ENCODE measurements at regions of chr6 and their contacts with region 1.

Region 1: GRCh38 chr6:116405138-116405537 is 34.4 kb downstream of the DSE start:
- DNase-seq: peak; percentile 71
- ATAC-seq: peak; percentile 53
- H3K4me3 ChIP-seq: peak overlapping the region in 3 of 5 experiments; percentile 14 to 42 (median 18)
- H3K4me3 Mint-ChIP-seq: peak overlapping the region; percentile 61
- H3K27ac ChIP-seq: peak overlapping the region; percentile 70 to 84
- H3K27ac Mint-ChIP-seq: peak overlapping the region; percentile 96
- H3K4me1 ChIP-seq: peaks cover 58 to 60% of the 10 kb centered on the region in 2 donors
- H3K4me1 Mint-ChIP-seq: peaks cover 53% of the 10 kb centered on the region
- H3K27me3 ChIP-seq: no peaks in the 10 kb centered on the region
- H3K27me3 Mint-ChIP-seq: no peaks in the 10 kb centered on the region
- CTCF ChIP-seq: no peak

Region 2: DNA sequence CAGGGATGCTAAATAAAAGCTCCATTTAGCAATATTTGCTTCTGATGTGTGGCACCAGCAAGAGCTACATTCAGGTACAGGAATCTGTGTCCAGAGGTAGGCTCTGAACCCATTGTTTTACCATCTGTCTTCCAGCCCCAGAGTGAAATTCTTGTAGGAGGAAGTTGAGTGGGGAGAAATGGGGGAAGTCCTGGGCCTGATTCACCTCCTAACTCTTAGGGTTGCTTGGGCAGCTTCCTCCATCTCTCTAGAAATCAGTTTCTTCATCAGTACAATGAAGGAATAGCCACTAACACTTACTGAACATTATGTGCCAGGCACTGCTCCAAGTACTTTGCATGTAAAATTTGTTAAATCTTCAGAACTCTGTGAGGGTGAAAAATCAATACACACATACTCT is 90.3 kb before region 1 on chr6:
- CTCF ChIA-PET with region 1: no interaction called
- POLR2A ChIA-PET with region 1: no interaction called
- intact Hi-C with region 1: no loop called
- DNase-seq: peak; percentile 23
- ATAC-seq: no peak
- H3K4me3 ChIP-seq: no peak overlapping the region
- H3K4me3 Mint-ChIP-seq: no peak overlapping the region
- H3K27ac ChIP-seq: no peak overlapping the region
- H3K27ac Mint-ChIP-seq: no peak overlapping the region
- H3K4me1 ChIP-seq: peaks cover 9% of the 10 kb centered on the region in 2 donors
- H3K4me1 Mint-ChIP-seq: peaks cover 7% of the 10 kb centered on the region
- H3K27me3 ChIP-seq: no peaks in the 10 kb centered on the region
- H3K27me3 Mint-ChIP-seq: no peaks in the 10 kb centered on the region
- CTCF ChIP-seq: no peak

Region 3: DNA sequence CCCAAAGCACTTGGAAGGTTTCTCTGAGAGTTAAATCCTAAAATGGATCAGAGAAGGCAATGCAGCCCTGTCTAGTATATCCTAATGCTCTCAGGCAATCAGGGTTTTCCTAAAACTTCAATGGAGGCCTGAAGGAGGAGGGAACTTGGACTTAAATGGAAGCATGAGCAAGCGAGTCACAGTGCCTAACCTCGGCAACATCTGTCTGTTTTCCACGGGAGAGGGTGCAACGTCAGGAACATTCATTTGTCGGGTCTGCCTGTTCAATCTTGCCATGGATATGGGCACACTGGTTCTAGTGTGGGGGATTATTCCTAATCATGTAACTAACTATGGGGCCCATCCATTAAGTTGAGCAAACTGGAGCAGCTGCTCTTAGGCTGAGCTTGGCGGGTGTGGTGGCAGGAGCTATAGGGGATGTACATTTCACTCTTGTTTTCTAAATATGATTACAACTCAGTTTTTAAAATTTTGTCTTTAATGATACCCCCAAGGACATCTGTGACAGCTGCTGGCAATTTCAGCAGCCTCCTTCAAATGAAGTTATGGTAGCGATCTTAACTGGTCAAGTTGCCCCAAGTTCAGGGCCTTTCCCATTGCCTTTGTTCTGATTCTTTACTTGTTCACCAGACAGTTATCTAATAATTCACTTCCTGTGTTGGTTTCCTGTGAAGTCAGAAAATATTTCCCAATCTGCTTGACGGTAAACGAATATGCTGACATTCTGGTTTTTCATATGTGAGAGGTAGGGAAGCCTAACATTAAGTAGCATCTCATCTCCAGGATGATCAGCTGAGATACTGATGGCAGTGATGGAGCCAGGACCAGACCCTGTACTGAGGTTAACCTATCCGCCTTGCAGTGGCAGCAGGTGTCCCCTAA is 12.8 kb before region 1 on chr6:
- CTCF ChIA-PET with region 1: interaction called, 9 read pairs
- POLR2A ChIA-PET with region 1: no interaction called
- intact Hi-C with region 1: loop called (anchors 2 kb)
- DNase-seq: peak; percentile 68
- ATAC-seq: peak; percentile 40
- H3K4me3 ChIP-seq: peak overlapping the region in 1 of 5 experiments; percentile 19
- H3K4me3 Mint-ChIP-seq: peak overlapping the region; percentile 66
- H3K27ac ChIP-seq: peak overlapping the region; percentile 39 to 93
- H3K27ac Mint-ChIP-seq: peak overlapping the region; percentile 81
- H3K4me1 ChIP-seq: peaks cover 71 to 77% of the 10 kb centered on the region in 2 donors
- H3K4me1 Mint-ChIP-seq: peaks cover 67% of the 10 kb centered on the region
- H3K27me3 ChIP-seq: no peaks in the 10 kb centered on the region
- H3K27me3 Mint-ChIP-seq: no peaks in the 10 kb centered on the region
- CTCF ChIP-seq: no peak

Region 4: DNA sequence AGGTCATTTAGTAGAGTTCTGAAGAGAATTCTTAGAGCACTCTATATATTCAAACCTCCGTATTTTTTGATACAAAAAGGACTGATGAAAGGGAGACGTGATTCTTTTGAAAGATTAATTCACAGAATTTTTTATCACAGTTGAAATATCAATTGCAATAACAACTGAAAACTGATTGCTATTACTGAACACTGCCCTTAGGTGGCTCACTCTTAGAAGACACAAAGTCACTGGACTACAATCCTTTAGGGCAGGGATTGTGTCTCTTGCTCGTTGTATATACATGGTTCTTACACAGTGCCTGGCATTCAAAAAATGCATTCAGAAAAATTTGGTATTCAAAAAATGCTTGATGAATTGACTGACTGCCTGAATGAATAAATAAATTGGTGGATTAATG is 39.0 kb after region 1 on chr6:
- CTCF ChIA-PET with region 1: interaction called, 4 read pairs
- POLR2A ChIA-PET with region 1: no interaction called
- intact Hi-C with region 1: loop called (anchors 5 kb)
- DNase-seq: peak; percentile 56
- ATAC-seq: peak; percentile 86
- H3K4me3 ChIP-seq: no peak overlapping the region
- H3K4me3 Mint-ChIP-seq: no peak overlapping the region
- H3K27ac ChIP-seq: no peak overlapping the region
- H3K27ac Mint-ChIP-seq: no peak overlapping the region
- H3K4me1 ChIP-seq: peaks cover 16 to 23% of the 10 kb centered on the region in 2 donors
- H3K4me1 Mint-ChIP-seq: peaks cover 27% of the 10 kb centered on the region
- H3K27me3 ChIP-seq: no peaks in the 10 kb centered on the region
- H3K27me3 Mint-ChIP-seq: no peaks in the 10 kb centered on the region
- CTCF ChIP-seq: peak; percentile 75

Region 5: GRCh38 chr6:116586276-116586675 is 181.1 kb after region 1 on chr6:
- CTCF ChIA-PET with region 1: no interaction called
- POLR2A ChIA-PET with region 1: no interaction called
- intact Hi-C with region 1: no loop called
- DNase-seq: no peak
- ATAC-seq: no peak
- H3K4me3 ChIP-seq: no peak overlapping the region
- H3K4me3 Mint-ChIP-seq: no peak overlapping the region
- H3K27ac ChIP-seq: no peak overlapping the region
- H3K27ac Mint-ChIP-seq: no peak overlapping the region
- H3K4me1 ChIP-seq: no peaks in the 10 kb centered on the region
- H3K4me1 Mint-ChIP-seq: no peaks in the 10 kb centered on the region
- H3K27me3 ChIP-seq: no peaks in the 10 kb centered on the region
- H3K27me3 Mint-ChIP-seq: no peaks in the 10 kb centered on the region
- CTCF ChIP-seq: no peak